Heart left ventricle (tissue), 16 donors: ENCODE measurements at regions of chr6 and their contacts with region 1.

Region 1: DNA sequence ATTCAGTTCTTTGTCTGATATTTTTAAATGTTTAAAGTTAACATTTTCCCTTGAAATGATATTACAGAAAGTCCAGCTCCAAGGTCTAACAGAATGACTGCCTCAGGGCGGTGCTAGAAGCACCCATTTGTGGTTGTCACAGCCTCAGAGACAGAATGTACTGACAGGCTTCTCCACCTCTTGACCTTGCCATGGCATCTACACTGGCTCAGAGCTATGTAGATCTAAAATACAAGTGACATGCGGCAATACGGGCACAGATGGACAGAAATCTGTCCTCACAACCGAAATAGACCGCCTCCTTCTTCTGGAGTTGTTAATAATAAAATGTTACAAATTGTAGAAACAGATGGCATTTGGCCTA is 167.2 kb upstream of the THEMIS start:
- DNase-seq: peak in 4 of 5 donors; percentile 30 to 73 (median 56)
- ATAC-seq: peak; percentile 97 to 98 (median 98)
- H3K4me3 ChIP-seq: no peak overlapping the region
- H3K27ac ChIP-seq: peak overlapping the region in 8 of 12 donors; percentile 1 to 50 (median 39)
- H3K4me1 ChIP-seq: peaks cover 0 to 33% (median 1%) of the 10 kb centered on the region in 12 donors
- H3K27me3 ChIP-seq: no peaks in the 10 kb centered on the region
- CTCF ChIP-seq: peak in 7 of 12 donors; percentile 12 to 47 (median 30)
- POLR2A ChIP-seq: no peak

Region 2: GRCh38 chr6:127851197-127851596 is 216.9 kb before region 1 on chr6:
- intact Hi-C with region 1: no loop called
- DNase-seq: no peak
- ATAC-seq: no peak
- H3K4me3 ChIP-seq: no peak overlapping the region
- H3K27ac ChIP-seq: no peak overlapping the region
- H3K4me1 ChIP-seq: no peaks in the 10 kb centered on the region
- H3K27me3 ChIP-seq: no peaks in the 10 kb centered on the region
- CTCF ChIP-seq: no peak
- POLR2A ChIP-seq: no peak

Region 3: DNA sequence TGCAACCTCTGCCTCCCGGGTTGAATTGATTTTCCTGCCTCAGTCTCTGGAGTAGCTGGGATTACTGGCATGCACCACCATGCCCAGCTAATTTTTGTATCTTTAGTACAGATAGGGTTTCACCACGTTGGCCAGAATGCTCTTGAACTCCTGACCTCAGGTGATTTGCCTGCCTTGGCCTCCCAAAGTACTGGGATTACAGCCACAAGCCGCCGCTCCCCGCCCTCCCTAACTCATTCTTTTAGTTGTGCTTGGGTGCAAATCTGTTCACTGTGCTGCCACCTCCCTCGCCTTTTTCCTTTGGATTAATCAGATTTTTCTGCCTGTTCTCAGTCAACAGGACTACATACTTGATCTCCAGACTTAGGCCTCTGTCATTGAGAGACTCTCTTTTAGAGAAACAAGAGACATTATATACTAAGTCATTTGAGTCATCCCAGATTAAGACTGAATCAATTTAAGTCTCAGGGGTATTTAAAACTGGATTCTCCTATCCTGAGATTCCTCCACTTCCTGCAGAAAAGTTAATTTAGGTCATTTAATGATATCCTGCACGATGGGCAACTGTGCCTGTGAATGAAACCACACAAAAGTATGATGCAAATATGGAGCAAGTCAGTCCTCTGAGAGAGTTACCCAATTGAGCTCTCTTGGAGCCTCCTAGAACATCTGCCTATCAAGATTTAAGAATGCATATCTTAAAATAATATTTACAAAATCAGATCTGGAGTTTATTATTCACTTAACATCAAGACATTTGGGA is 31.1 kb before region 1 on chr6:
- intact Hi-C with region 1: no loop called
- DNase-seq: no peak
- ATAC-seq: no peak
- H3K4me3 ChIP-seq: no peak overlapping the region
- H3K27ac ChIP-seq: no peak overlapping the region
- H3K4me1 ChIP-seq: peaks cover 0 to 16% (median 1%) of the 10 kb centered on the region in 12 donors
- H3K27me3 ChIP-seq: no peaks in the 10 kb centered on the region
- CTCF ChIP-seq: no peak
- POLR2A ChIP-seq: no peak

Region 4: DNA sequence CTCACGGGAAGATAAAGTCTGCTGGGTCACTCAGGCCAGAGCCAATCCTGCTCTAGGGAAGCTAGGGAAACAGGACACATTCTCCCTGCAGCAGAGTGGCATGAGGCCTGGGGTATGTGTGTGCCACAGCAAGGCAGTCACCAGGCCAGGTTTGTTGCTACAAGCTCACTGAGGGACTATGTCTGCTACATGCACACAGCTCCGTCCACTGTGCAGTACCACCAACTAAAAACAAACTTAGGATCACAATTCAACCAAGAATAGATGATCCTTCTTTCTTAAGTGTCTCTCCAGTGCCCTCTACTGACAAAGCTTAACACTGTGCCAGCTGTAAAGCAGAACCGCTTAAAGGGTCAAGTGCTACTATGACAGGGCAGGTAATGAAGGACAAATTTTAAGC is 259.8 kb after region 1 on chr6:
- intact Hi-C with region 1: loop called in 1 of 10 experiments (anchors 10 kb)
- DNase-seq: no peak
- ATAC-seq: peak in 3 of 4 donors; percentile 37 to 57 (median 50)
- H3K4me3 ChIP-seq: no peak overlapping the region
- H3K27ac ChIP-seq: no peak overlapping the region
- H3K4me1 ChIP-seq: peaks cover 0 to 21% (median 7%) of the 10 kb centered on the region in 12 donors
- H3K27me3 ChIP-seq: no peaks in the 10 kb centered on the region
- CTCF ChIP-seq: peak in 10 of 12 donors; percentile 20 to 55 (median 38)
- POLR2A ChIP-seq: no peak

Region 5: GRCh38 chr6:128841518-128841917 is 773.4 kb after region 1 on chr6:
- intact Hi-C with region 1: no loop called
- DNase-seq: no peak
- ATAC-seq: no peak
- H3K4me3 ChIP-seq: no peak overlapping the region
- H3K27ac ChIP-seq: no peak overlapping the region
- H3K4me1 ChIP-seq: no peaks in the 10 kb centered on the region
- H3K27me3 ChIP-seq: no peaks in the 10 kb centered on the region
- CTCF ChIP-seq: no peak
- POLR2A ChIP-seq: no peak